GM12878 (cell line): ENCODE measurements at regions of chr15 and their contacts with region 1.

Region 1: GRCh38 chr15:40098489-40099261 is 10.0 kb downstream of the BMF start:
- DNase-seq: peak; percentile 84
- ATAC-seq: peak; percentile 80
- H3K4me3 ChIP-seq: peak overlapping the region; percentile 46
- H3K27ac ChIP-seq: peak overlapping the region; percentile 100
- H3K4me1 ChIP-seq: peaks cover 97% of the 10 kb centered on the region
- H3K27me3 ChIP-seq: no peaks in the 10 kb centered on the region
- CTCF ChIP-seq: no peak
- EP300 ChIP-seq: peak; percentile 98 to 99
- POLR2A ChIP-seq: peak; percentile 73
- RAD21 ChIP-seq: no peak

Region 2: GRCh38 chr15:40038638-40039543 is 59.8 kb before region 1 on chr15 and contains the start of gene SRP14:
- CTCF ChIA-PET with region 1: interaction called, 776 read pairs
- POLR2A ChIA-PET with region 1: interaction called, 307 read pairs
- RAD21 ChIA-PET with region 1: interaction called, 903 read pairs
- SMC1A ChIA-PET with region 1: interaction called, 1,082 read pairs
- in situ Hi-C with region 1: no loop called
- intact Hi-C with region 1: no loop called
- DNase-seq: peak; percentile 75
- ATAC-seq: peak; percentile 95
- H3K4me3 ChIP-seq: peak within 1 kb of the TSS; percentile 89
- H3K27ac ChIP-seq: peak within 1 kb of the TSS; percentile 79
- H3K4me1 ChIP-seq: peaks cover 9% of the 10 kb centered on the region
- H3K27me3 ChIP-seq: no peaks in the 10 kb centered on the region
- CTCF ChIP-seq: 0 out of 6 replicates have a peak, but pooled peaks of 1 of the 3 experiments have one; percentile 1
- EP300 ChIP-seq: 0 out of 4 replicates have a peak, but pooled peaks of 1 of the 2 experiments have one; percentile 3
- POLR2A ChIP-seq: peak; percentile 98
- RAD21 ChIP-seq: no peak
- polyA plus RNA-seq, gene SRP14: 1,041 to 1,182 TPM

Region 3: GRCh38 chr15:40069178-40070165 is 29.2 kb before region 1 on chr15:
- CTCF ChIA-PET with region 1: interaction called, 578 read pairs
- POLR2A ChIA-PET with region 1: interaction called, 208 read pairs
- RAD21 ChIA-PET with region 1: interaction called, 509 read pairs
- SMC1A ChIA-PET with region 1: interaction called, 981 read pairs
- in situ Hi-C with region 1: no loop called
- intact Hi-C with region 1: loop called (anchors 1 kb)
- DNase-seq: no peak
- ATAC-seq: peak; percentile 88
- H3K4me3 ChIP-seq: no peak overlapping the region; the same call in 1 of the 2 replicates
- H3K27ac ChIP-seq: peak overlapping the region; percentile 66
- H3K4me1 ChIP-seq: peaks cover 36% of the 10 kb centered on the region
- H3K27me3 ChIP-seq: no peaks in the 10 kb centered on the region
- CTCF ChIP-seq: no peak
- EP300 ChIP-seq: no peak
- POLR2A ChIP-seq: peak; percentile 79
- RAD21 ChIP-seq: no peak

Region 4: GRCh38 chr15:40087991-40088928 is 10.4 kb before region 1 on chr15:
- CTCF ChIA-PET with region 1: interaction called, 126 read pairs
- POLR2A ChIA-PET with region 1: interaction called, 6 read pairs
- RAD21 ChIA-PET with region 1: interaction called, 20 read pairs
- SMC1A ChIA-PET with region 1: interaction called, 981 read pairs
- in situ Hi-C with region 1: no loop called
- intact Hi-C with region 1: no loop called
- DNase-seq: no peak
- ATAC-seq: no peak; the same call in 2 of the 3 replicates
- H3K4me3 ChIP-seq: no peak overlapping the region
- H3K27ac ChIP-seq: no peak overlapping the region
- H3K4me1 ChIP-seq: peaks cover 12% of the 10 kb centered on the region
- H3K27me3 ChIP-seq: no peaks in the 10 kb centered on the region
- CTCF ChIP-seq: no peak
- EP300 ChIP-seq: no peak
- POLR2A ChIP-seq: peak; percentile 56; the same call in 1 of the 2 replicates
- RAD21 ChIP-seq: no peak

Region 5: GRCh38 chr15:40182358-40183029 is 83.8 kb after region 1 on chr15:
- CTCF ChIA-PET with region 1: interaction called, 9 read pairs
- POLR2A ChIA-PET with region 1: interaction called, 3 read pairs
- RAD21 ChIA-PET with region 1: interaction called, 11 read pairs
- SMC1A ChIA-PET with region 1: interaction called, 23 read pairs
- in situ Hi-C with region 1: no loop called
- intact Hi-C with region 1: no loop called
- DNase-seq: no peak
- ATAC-seq: peak; percentile 73
- H3K4me3 ChIP-seq: no peak overlapping the region; the same call in 1 of the 2 replicates
- H3K27ac ChIP-seq: peak overlapping the region; percentile 39
- H3K4me1 ChIP-seq: peaks cover 19% of the 10 kb centered on the region
- H3K27me3 ChIP-seq: no peaks in the 10 kb centered on the region
- CTCF ChIP-seq: no peak
- EP300 ChIP-seq: no peak
- POLR2A ChIP-seq: no peak
- RAD21 ChIP-seq: no peak

Region 6: GRCh38 chr15:40344631-40345120 is 246.0 kb after region 1 on chr15:
- CTCF ChIA-PET with region 1: no interaction called
- POLR2A ChIA-PET with region 1: no interaction called
- RAD21 ChIA-PET with region 1: no interaction called
- SMC1A ChIA-PET with region 1: no interaction called
- in situ Hi-C with region 1: no loop called
- intact Hi-C with region 1: no loop called
- DNase-seq: no peak
- ATAC-seq: peak; percentile 91
- H3K4me3 ChIP-seq: no peak overlapping the region
- H3K27ac ChIP-seq: no peak overlapping the region
- H3K4me1 ChIP-seq: no peaks in the 10 kb centered on the region
- H3K27me3 ChIP-seq: no peaks in the 10 kb centered on the region; a peak in 1 of 4 replicates
- CTCF ChIP-seq: peak; percentile 77 to 84 (median 83)
- EP300 ChIP-seq: no peak
- POLR2A ChIP-seq: no peak
- RAD21 ChIP-seq: peak; percentile 79